IMR-90 (cell line): ENCODE measurements at regions of chr16 and their contacts with region 1.

Region 1: GRCh38 chr16:51818342-51818944 is 667.4 kb upstream of the SALL1 start:
- DNase-seq: peak; percentile 73
- ATAC-seq: peak; percentile 61
- H3K4me3 ChIP-seq: no peak overlapping the region
- H3K27ac ChIP-seq: peak overlapping the region; percentile 57
- H3K4me1 ChIP-seq: peaks cover 2% of the 10 kb centered on the region; the same call in 1 of the 2 replicates
- H3K27me3 ChIP-seq: no peaks in the 10 kb centered on the region
- CTCF ChIP-seq: peak; percentile 89
- POLR2A ChIP-seq: no peak
- RAD21 ChIP-seq: peak; percentile 91

Region 2: DNA sequence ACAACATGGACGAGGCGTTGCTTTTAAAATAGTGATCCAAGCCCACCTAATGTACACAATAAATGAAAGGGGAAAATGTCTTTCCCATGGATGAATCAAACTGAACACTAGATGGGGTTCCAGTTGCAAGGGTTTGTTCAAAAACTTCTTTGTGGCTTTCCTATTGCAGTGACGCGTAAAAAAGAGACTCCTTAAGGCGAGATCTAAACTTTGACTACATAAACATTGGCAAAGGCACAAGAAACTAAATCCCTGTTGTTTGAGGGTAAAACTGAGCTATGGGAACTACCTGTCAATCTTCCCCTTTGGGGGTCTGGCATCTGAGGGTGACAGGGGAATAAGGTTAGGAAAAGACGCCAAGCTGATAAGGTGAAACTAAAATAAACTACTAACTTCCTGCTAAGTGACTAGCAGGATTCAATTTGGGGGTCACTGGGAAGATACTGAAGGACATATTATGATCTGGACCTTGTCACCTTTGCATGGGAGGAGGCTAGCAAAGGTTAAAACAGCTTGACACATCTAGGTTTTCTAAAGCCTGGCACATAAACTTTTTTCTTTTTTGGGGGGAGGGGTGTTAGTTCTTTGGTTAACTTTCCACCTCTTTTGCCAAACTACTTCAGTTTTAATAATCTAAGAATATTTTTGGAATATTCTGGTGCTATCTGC is 672.1 kb before region 1 on chr16:
- CTCF ChIA-PET with region 1: no interaction called
- POLR2A ChIA-PET with region 1: interaction called, 3 read pairs
- dilution Hi-C with region 1: no loop called
- in situ Hi-C with region 1: no loop called
- intact Hi-C with region 1: loop called (anchors 2 kb)
- DNase-seq: peak; percentile 75
- ATAC-seq: 0 out of 2 replicates have a peak, but pooled peaks have one; percentile 16
- H3K4me3 ChIP-seq: peak overlapping the region; percentile 34; the same call in 1 of the 2 replicates
- H3K27ac ChIP-seq: no peak overlapping the region
- H3K4me1 ChIP-seq: no peaks in the 10 kb centered on the region
- H3K27me3 ChIP-seq: no peaks in the 10 kb centered on the region
- CTCF ChIP-seq: peak; percentile 73
- POLR2A ChIP-seq: no peak
- RAD21 ChIP-seq: peak; percentile 75

Region 3: DNA sequence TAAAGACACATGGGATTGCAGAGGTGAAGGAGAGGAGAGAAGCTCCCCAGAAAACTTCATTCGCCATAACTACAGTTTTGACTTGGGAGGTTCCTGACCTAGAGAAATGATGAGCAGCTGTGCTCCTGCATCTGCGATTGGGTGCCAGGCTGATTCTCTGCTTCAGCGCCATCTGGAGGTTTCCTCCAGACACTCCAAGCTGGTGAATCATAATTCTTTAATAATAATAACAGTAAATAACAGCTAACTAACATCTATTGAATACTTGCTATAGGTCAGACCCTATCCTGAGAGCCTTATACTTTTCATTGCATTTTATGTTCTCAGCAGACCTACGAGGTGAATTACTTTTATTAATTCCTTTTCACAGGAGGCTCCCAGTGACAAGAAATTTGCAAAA is 152.7 kb after region 1 on chr16:
- CTCF ChIA-PET with region 1: interaction called, 27 read pairs
- POLR2A ChIA-PET with region 1: no interaction called
- dilution Hi-C with region 1: no loop called
- in situ Hi-C with region 1: no loop called
- intact Hi-C with region 1: loop called (anchors 1 kb)
- DNase-seq: peak; percentile 52
- ATAC-seq: peak; percentile 31
- H3K4me3 ChIP-seq: no peak overlapping the region
- H3K27ac ChIP-seq: no peak overlapping the region
- H3K4me1 ChIP-seq: peaks cover 15% of the 10 kb centered on the region
- H3K27me3 ChIP-seq: no peaks in the 10 kb centered on the region
- CTCF ChIP-seq: peak; percentile 64
- POLR2A ChIP-seq: no peak
- RAD21 ChIP-seq: peak; percentile 69

Region 4: GRCh38 chr16:51982715-51983680 is 164.6 kb after region 1 on chr16:
- CTCF ChIA-PET with region 1: interaction called, 19 read pairs
- POLR2A ChIA-PET with region 1: interaction called, 3 read pairs
- dilution Hi-C with region 1: no loop called
- in situ Hi-C with region 1: loop called (anchors 5 kb)
- intact Hi-C with region 1: loop called (anchors 1 kb)
- DNase-seq: peak; percentile 78
- ATAC-seq: peak; percentile 72
- H3K4me3 ChIP-seq: no peak overlapping the region
- H3K27ac ChIP-seq: no peak overlapping the region
- H3K4me1 ChIP-seq: no peaks in the 10 kb centered on the region; the same call in 1 of the 2 replicates
- H3K27me3 ChIP-seq: no peaks in the 10 kb centered on the region
- CTCF ChIP-seq: peak; percentile 90
- POLR2A ChIP-seq: no peak
- RAD21 ChIP-seq: peak; percentile 96

Region 5: GRCh38 chr16:51989637-51990230 is 171.3 kb after region 1 on chr16:
- CTCF ChIA-PET with region 1: interaction called, 4 read pairs
- POLR2A ChIA-PET with region 1: interaction called, 3 read pairs
- dilution Hi-C with region 1: no loop called
- in situ Hi-C with region 1: loop called (anchors 5 kb)
- intact Hi-C with region 1: no loop called
- DNase-seq: no peak
- ATAC-seq: no peak
- H3K4me3 ChIP-seq: no peak overlapping the region
- H3K27ac ChIP-seq: no peak overlapping the region
- H3K4me1 ChIP-seq: no peaks in the 10 kb centered on the region
- H3K27me3 ChIP-seq: peaks cover 2% of the 10 kb centered on the region; the same call in 1 of the 2 replicates
- CTCF ChIP-seq: no peak
- POLR2A ChIP-seq: no peak
- RAD21 ChIP-seq: no peak